AG04449 (cell line): ENCODE measurements at regions of chr3 and their contacts with region 1.

Region 1: GRCh38 chr3:127970966-127971592 is 56.0 kb downstream of the KBTBD12 start:
- DNase-seq: no peak
- H3K4me3 ChIP-seq: no peak overlapping the region
- CTCF ChIP-seq: peak; percentile 73

Region 2: GRCh38 chr3:127574880-127575878 is 395.9 kb before region 1 on chr3:
- CTCF ChIA-PET with region 1: interaction called, 15 read pairs
- POLR2A ChIA-PET with region 1: no interaction called
- DNase-seq: no peak
- H3K4me3 ChIP-seq: no peak overlapping the region
- CTCF ChIP-seq: peak; percentile 95

Region 3: DNA sequence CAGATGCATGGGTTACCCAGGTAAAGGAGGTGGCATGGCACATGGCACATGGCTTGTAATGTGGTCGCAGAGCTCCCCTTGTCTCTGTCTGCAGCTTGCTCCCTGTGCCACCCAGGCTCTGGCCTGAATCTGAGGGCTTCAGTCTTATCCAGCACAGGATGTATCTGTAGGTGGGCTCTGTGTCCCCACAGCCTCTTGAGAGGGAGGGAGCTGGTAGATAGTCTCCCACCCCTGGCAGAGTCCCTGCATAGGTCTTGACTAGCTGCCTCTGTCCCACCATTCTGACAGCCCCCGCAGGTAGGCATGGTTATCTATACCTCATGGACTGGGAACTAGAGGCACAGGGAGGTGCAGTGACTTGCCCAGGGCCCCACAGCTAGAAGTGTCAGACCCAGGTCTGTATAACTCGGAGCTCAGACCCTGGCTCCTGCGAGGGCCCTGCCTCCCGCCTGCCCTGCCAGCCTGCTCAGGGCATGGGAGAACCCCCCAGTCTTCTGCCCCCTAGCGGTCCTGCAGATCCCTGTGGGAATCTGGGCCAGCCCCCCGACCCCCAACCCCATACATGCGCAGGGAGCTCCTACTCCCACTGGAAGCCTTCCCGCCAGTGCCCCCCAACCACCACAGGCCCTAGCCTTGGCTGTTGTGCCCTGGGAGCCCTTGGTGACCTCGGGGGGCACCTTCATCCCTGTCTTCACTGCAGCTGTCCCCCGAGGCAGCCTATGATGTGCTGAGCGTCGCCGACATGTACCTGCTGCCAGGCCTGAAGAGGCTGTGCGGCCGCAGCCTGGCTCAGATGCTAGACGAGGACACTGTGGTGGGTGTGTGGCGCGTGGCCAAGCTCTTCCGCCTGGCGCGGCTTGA is 291.6 kb before region 1 on chr3:
- CTCF ChIA-PET with region 1: interaction called, 11 read pairs
- POLR2A ChIA-PET with region 1: no interaction called
- DNase-seq: no peak
- H3K4me3 ChIP-seq: no peak overlapping the region
- CTCF ChIP-seq: no peak

Region 4: GRCh38 chr3:127750226-127751031 is 220.7 kb before region 1 on chr3:
- CTCF ChIA-PET with region 1: no interaction called
- POLR2A ChIA-PET with region 1: no interaction called
- DNase-seq: peak; percentile 76
- H3K4me3 ChIP-seq: no peak overlapping the region
- CTCF ChIP-seq: no peak

Region 5: GRCh38 chr3:127940116-127940515 is 31.0 kb before region 1 on chr3:
- CTCF ChIA-PET with region 1: no interaction called
- POLR2A ChIA-PET with region 1: no interaction called
- DNase-seq: no peak
- H3K4me3 ChIP-seq: no peak overlapping the region
- CTCF ChIP-seq: no peak

Region 6: GRCh38 chr3:127959846-127960245 is 11.2 kb before region 1 on chr3:
- CTCF ChIA-PET with region 1: interaction called, 13 read pairs
- POLR2A ChIA-PET with region 1: no interaction called
- DNase-seq: no peak
- H3K4me3 ChIP-seq: no peak overlapping the region
- CTCF ChIP-seq: no peak